ENCODE measurements at regions of chr7 and their contacts with region 1.

Region 1: GRCh38 chr7:102404005-102404861 is 8.1 kb downstream of the PRKRIP1 start:
- DNase-seq: peak; percentile 80 to 82
- ATAC-seq: peak; percentile 98 to 99
- H3K4me3 ChIP-seq: no peak overlapping the region
- H3K27ac ChIP-seq: no peak overlapping the region
- H3K4me1 ChIP-seq: no peaks in the 10 kb centered on the region
- CTCF ChIP-seq: peak; percentile 51
- EP300 ChIP-seq: no peak
- POLR2A ChIP-seq: no peak
- RAD21 ChIP-seq: peak; percentile 53 to 61; a peak in 3 of 5 replicates

Region 2: GRCh38 chr7:101990811-101991418 is 413.3 kb before region 1 on chr7:
- CTCF ChIA-PET with region 1: no interaction called
- POLR2A ChIA-PET with region 1: no interaction called
- DNase-seq: no peak
- ATAC-seq: no peak
- H3K4me3 ChIP-seq: no peak overlapping the region
- H3K27ac ChIP-seq: no peak overlapping the region
- H3K4me1 ChIP-seq: peaks cover 9% of the 10 kb centered on the region; the same call in 2 of the 3 replicates
- CTCF ChIP-seq: no peak
- EP300 ChIP-seq: no peak
- POLR2A ChIP-seq: no peak
- RAD21 ChIP-seq: no peak

Region 3: DNA sequence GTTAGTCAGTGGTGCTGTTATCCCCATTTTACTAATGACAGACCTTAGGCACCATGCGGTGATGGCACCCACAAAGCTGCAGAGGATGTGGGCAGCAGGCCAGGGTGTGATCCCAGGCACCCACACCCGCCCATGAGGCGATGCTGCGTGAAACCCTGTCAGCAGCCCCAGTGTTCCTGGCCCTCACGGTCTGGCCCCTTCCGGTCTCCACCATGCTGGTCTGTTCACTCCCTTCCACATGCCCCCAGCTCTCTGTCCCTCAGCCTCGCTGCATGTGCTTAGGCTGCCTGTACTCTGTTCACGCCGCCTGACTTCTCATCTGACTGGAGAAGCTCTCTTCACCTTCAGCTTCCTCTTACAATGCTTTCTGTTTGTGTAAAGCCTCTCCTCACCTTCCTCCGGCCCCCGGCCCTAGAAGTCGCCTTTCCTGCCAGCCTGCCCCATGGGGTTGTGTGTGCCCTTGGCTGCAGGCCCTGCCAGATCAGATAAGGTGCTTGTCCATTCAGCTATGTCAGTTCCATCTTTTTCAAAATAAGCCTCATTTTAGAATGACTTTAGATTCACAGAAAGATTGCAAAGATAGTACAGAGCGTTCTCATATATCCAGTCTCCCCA is 11.6 kb after region 1 on chr7:
- CTCF ChIA-PET with region 1: interaction called, 23 read pairs
- POLR2A ChIA-PET with region 1: no interaction called
- DNase-seq: no peak
- ATAC-seq: no peak
- H3K4me3 ChIP-seq: no peak overlapping the region
- H3K27ac ChIP-seq: no peak overlapping the region
- H3K4me1 ChIP-seq: no peaks in the 10 kb centered on the region
- CTCF ChIP-seq: no peak
- EP300 ChIP-seq: no peak
- POLR2A ChIP-seq: no peak
- RAD21 ChIP-seq: no peak

Region 4: GRCh38 chr7:102463841-102464576 is 59.8 kb after region 1 on chr7:
- CTCF ChIA-PET with region 1: interaction called, 10 read pairs
- POLR2A ChIA-PET with region 1: no interaction called
- DNase-seq: no peak
- ATAC-seq: no peak
- H3K4me3 ChIP-seq: peak overlapping the region; percentile 77
- H3K27ac ChIP-seq: peak overlapping the region; percentile 84 to 94
- H3K4me1 ChIP-seq: peaks cover 10% of the 10 kb centered on the region; the same call in 2 of the 3 replicates
- CTCF ChIP-seq: no peak
- EP300 ChIP-seq: no peak
- POLR2A ChIP-seq: no peak
- RAD21 ChIP-seq: no peak